Activated CD4-positive, alpha-beta memory T cell treated with anti-CD3 and anti-CD28 coated beads for 36 hours (primary cell): ENCODE measurements at regions of chr12 and their contacts with region 1.

Region 1: GRCh38 chr12:77065361-77066204 is at the start of gene E2F7:
- DNase-seq: peak; percentile 91
- H3K4me3 Mint-ChIP-seq: peak within 1 kb of the TSS; percentile 77
- H3K27ac Mint-ChIP-seq: no peak within 1 kb of the TSS
- H3K4me1 Mint-ChIP-seq: peaks cover 8% of the 10 kb centered on the region
- H3K27me3 Mint-ChIP-seq: peaks cover 19% of the 10 kb centered on the region
- total RNA-seq, gene E2F7: 5.8 to 6.0 TPM

Region 2: GRCh38 chr12:76763743-76764675 is 301.6 kb before region 1 on chr12 and contains the start of gene ZDHHC17:
- CTCF ChIA-PET with region 1: no interaction called
- POLR2A ChIA-PET with region 1: no interaction called
- intact Hi-C with region 1: loop called (anchors 2 kb)
- DNase-seq: peak; percentile 93
- H3K4me3 Mint-ChIP-seq: peak within 1 kb of the TSS; percentile 99
- H3K27ac Mint-ChIP-seq: peak within 1 kb of the TSS; percentile 93
- H3K4me1 Mint-ChIP-seq: peaks cover 34% of the 10 kb centered on the region
- H3K27me3 Mint-ChIP-seq: no peaks in the 10 kb centered on the region
- total RNA-seq, gene ZDHHC17: 18.8 to 20.0 TPM

Region 3: DNA sequence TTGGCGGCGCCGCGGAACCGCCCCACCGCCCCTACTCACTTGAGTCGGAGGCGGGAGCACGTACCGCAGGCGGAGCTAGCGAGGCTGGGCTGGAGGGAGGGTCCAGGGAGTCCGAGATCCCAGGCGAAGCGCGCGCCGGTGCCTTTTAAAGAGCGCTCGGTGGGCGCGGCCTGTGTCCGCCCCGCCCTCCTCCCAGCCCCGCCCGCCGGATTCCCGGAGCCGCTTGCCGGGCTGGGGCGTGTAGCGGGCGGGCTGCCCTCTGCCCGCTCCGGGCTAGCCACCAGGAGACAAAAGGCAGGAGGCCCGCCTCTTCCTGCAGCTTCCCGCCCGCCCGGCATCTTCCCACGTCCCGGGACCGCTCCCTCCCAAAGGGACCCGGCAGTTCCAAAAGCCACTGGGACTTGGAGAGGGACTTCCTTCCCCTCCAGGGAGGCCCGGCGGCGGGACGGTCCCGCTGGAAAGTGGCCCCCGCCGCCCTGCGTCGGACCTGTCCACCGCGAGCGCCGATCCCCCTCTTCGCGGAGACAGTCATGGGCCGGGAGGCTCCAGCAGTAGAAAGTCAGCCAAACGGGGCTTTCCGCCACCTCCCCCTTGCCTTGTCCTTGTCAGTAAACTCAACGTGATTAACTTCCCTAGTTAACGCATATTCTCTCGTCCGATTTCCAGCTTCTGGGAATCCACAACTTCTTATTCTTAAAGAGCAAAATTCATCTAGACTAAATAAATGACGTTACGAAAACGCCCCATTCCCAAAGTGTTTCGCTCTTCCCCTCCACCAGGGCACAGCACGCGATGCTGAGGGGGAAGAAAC is 186.5 kb before region 1 on chr12 and contains the start of gene CSRP2:
- CTCF ChIA-PET with region 1: no interaction called
- POLR2A ChIA-PET with region 1: no interaction called
- intact Hi-C with region 1: loop called (anchors 2 kb)
- DNase-seq: peak; percentile 80
- H3K4me3 Mint-ChIP-seq: peak within 1 kb of the TSS; percentile 83
- H3K27ac Mint-ChIP-seq: no peak within 1 kb of the TSS
- H3K4me1 Mint-ChIP-seq: peaks cover 2% of the 10 kb centered on the region
- H3K27me3 Mint-ChIP-seq: peaks cover 47% of the 10 kb centered on the region
- total RNA-seq, gene CSRP2: 0.33 to 0.41 TPM

Region 4: DNA sequence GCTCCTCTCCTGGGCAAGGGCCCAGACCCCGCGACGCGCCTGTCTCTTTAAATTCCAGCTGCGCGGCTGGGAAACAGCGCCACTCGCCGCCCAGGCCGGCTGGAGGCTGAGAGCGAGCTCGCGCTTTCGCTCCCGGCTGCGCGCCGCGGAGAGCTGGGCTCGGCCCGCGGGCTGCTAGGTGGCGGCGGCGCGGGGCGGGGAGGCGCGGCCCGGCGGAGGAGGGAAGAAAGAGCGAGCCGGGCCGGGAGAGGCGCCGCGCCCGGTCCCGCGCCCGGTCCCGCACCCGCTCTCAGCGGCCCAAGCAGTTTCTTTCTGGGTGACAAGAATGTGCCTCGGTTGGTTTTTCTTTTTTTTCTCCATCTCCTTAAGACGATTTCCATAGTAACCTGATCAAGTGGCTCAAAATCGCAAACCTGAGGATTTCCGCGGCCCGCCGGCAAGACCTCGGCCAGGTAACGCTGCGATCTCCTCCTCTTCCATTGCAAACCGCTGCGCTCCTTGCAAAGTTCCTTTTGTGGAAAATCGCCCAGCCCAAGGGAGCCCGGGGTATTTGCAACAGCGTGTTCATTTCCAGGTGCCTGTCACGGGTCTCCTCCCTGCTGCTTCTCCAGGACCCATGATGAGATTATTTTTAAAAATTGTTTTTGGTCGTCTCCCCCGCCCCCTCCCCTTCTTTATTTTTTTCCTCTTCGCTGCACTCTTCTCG is 259.3 kb after region 1 on chr12:
- CTCF ChIA-PET with region 1: no interaction called
- POLR2A ChIA-PET with region 1: no interaction called
- intact Hi-C with region 1: loop called (anchors 10 kb)
- DNase-seq: peak; percentile 48
- H3K4me3 Mint-ChIP-seq: peak overlapping the region; percentile 51
- H3K27ac Mint-ChIP-seq: no peak overlapping the region
- H3K4me1 Mint-ChIP-seq: peaks cover 6% of the 10 kb centered on the region
- H3K27me3 Mint-ChIP-seq: peaks cover 43% of the 10 kb centered on the region